ENCODE measurements at regions of chr6 and their contacts with region 1.

Region 1: GRCh38 chr6:145633981-145634627 is 101.2 kb downstream of the EPM2A start:
- DNase-seq: peak; percentile 56
- H3K4me3 Mint-ChIP-seq: no peak overlapping the region
- H3K27ac Mint-ChIP-seq: no peak overlapping the region
- H3K4me1 Mint-ChIP-seq: peaks cover 3% of the 10 kb centered on the region
- H3K27me3 Mint-ChIP-seq: no peaks in the 10 kb centered on the region

Region 2: DNA sequence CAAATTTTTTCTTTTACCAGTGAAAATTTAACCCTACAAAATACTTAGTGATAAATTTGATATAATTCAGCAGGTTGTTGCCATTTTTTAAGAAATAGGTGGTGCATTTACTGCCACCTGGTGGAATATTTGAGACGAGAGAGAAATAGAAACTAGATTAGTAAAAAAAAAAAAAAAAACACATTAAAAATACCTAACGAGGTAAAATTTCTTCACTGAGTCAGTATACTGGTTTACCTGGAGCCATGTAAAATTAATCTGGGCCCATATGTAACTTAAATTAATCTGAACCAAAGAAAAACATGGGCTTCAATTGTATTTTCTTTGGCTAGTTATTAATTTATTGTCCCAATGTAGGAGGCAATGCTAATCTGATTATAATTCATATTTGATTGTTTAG is 419.5 kb before region 1 on chr6:
- intact Hi-C with region 1: loop called (anchors 10 kb)
- DNase-seq: no peak
- H3K4me3 Mint-ChIP-seq: no peak overlapping the region
- H3K27ac Mint-ChIP-seq: no peak overlapping the region
- H3K4me1 Mint-ChIP-seq: peaks cover 8% of the 10 kb centered on the region
- H3K27me3 Mint-ChIP-seq: peaks cover 5% of the 10 kb centered on the region

Region 3: GRCh38 chr6:145887969-145888368 is 253.9 kb after region 1 on chr6:
- intact Hi-C with region 1: loop called (anchors 2 kb)
- DNase-seq: no peak
- H3K4me3 Mint-ChIP-seq: no peak overlapping the region
- H3K27ac Mint-ChIP-seq: no peak overlapping the region
- H3K4me1 Mint-ChIP-seq: no peaks in the 10 kb centered on the region
- H3K27me3 Mint-ChIP-seq: no peaks in the 10 kb centered on the region

Measured in activated T-helper 2 cell treated with anti-CD3 and anti-CD28 coated beads, Interferon-gamma antibody, Interleukin-2, Interleukin-4, amounts not matched to agents 10 μg/mL and 5 μg/mL and 100 μg/mL, durations not matched to agents 14 hours and 24 hours and 36 hours (primary cell).